Activated CD4-positive, alpha-beta memory T cell treated with anti-CD3 and anti-CD28 coated beads for 36 hours (primary cell): ENCODE measurements at regions of chr16 and their contacts with region 1.

Region 1: DNA sequence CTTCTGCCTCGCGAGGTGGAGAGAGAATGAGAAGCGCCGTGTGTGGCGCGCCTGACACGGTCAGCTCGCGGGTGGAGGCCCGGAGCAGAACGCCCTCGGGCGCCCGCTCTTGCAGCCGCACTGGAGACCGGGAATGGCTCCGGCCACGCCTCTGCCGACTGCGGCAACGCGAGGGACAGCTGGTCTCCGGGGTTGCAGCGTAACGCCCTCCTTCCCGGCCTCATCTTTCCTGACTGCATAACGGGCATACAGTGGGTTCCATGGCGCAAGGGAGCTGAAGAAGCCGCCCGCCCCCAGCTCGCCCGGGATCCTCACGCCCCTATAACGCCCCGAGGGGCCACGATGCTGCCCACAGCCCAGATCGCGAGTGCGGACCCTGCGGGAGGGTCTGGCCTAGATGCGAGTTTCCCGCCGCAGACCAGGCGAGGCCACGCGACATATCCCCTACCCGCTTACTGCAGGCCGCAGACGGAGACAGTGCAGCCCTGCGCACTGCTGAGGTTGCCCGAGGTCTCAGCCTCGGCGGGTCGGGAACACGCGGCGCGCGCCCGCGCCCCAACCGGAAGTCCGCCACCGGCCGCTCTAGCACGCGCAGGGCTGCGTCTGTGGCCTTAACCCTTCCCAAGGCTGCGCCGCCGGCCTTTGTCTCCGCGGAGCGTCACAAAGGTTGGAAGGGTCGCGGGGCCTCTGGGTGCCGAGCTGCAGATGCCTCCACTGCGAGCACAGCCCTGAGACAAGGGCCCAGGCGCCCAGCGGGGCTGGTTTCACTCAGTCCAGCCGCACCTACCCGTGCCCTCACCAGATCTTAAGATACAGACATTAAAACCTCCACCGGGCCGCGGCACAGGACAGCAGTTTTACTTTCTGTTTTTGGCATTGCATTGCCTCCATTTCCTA is 18.8 kb downstream of the BCL7C start:
- DNase-seq: peak; percentile 93
- H3K4me3 Mint-ChIP-seq: peak overlapping the region; percentile 96
- H3K27ac Mint-ChIP-seq: peak overlapping the region; percentile 90
- H3K4me1 Mint-ChIP-seq: peaks cover 34% of the 10 kb centered on the region
- H3K27me3 Mint-ChIP-seq: no peaks in the 10 kb centered on the region

Region 2: DNA sequence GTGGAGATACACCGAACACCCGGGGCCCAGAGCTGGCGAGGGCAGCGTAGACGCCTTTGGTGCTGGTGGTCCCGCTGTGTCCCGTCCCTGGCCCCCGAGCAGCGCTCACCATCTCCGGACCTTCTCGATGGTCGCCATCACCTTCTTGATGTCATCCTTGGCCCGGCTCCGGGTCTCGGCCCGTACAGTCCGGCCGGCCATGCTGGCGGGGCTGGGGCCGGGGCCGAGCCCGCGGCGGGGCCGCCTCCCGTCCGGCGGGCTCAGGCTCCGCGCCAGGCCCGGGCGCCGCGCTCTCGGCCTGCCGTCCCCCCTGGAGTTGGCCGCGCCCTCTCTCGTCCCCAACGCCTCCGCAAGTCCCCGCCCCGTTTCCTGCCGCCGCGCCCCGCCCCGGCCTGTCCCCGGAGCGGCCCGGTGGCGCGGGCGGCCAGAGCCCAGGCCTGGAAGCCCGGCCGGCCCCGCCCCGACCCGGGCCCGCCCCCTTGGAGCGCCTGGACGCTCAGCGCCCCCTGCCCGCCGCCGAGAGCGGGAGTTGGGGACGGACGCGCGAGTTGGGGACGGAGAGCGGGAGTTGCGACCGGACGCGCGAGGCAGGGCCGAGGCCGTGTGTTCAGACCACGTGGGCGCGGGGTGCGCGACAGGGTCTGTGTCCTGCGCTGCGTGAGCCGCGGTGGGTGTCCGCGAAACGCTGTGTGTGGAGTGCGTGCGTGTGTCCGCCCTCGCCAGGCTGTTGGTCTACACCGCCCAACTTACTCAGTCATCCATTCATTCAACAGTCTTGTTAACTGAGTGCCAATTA is 18.9 kb after region 1 on chr16 and contains the start of gene BCL7C:
- CTCF ChIA-PET with region 1: interaction called, 3 read pairs
- POLR2A ChIA-PET with region 1: interaction called, 5 read pairs
- intact Hi-C with region 1: loop called (anchors 2 kb)
- DNase-seq: peak; percentile 92
- H3K4me3 Mint-ChIP-seq: peak within 1 kb of the TSS; percentile 85
- H3K27ac Mint-ChIP-seq: peak within 1 kb of the TSS; percentile 74
- H3K4me1 Mint-ChIP-seq: peaks cover 38% of the 10 kb centered on the region
- H3K27me3 Mint-ChIP-seq: no peaks in the 10 kb centered on the region
- total RNA-seq, gene BCL7C: 25.6 to 25.7 TPM

Region 3: DNA sequence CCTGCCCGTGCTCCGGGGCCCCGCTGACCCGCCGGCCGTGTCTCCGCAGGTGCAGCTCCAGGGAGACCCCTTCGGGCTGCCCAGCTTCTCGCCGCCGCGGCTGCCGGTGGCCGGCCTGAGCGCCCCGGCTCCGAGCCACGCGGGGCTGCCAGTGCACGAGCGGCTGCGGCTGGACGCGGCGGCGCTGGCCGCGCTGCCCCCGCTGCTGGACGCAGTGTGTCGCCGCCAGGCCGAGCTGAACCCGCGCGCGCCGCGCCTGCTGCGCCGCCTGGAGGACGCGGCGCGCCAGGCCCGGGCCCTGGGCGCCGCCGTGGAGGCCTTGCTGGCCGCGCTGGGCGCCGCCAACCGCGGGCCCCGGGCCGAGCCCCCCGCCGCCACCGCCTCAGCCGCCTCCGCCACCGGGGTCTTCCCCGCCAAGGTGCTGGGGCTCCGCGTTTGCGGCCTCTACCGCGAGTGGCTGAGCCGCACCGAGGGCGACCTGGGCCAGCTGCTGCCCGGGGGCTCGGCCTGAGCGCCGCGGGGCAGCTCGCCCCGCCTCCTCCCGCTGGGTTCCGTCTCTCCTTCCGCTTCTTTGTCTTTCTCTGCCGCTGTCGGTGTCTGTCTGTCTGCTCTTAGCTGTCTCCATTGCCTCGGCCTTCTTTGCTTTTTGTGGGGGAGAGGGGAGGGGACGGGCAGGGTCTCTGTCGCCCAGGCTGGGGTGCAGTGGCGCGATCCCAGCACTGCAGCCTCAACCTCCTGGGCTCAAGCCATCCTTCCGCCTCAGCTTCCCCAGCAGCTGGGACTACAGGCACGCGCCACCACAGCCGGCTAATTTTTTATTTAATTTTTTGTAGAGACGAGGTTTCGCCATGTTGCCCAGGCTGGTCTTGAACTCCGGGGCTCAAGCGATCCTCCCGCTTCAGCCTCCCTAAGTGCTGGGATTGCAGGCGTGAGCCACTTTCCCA is 27.2 kb after region 1 on chr16:
- CTCF ChIA-PET with region 1: interaction called, 33 read pairs
- POLR2A ChIA-PET with region 1: interaction called, 14 read pairs
- intact Hi-C with region 1: loop called (anchors 2 kb)
- DNase-seq: peak; percentile 69
- H3K4me3 Mint-ChIP-seq: peak overlapping the region; percentile 93
- H3K27ac Mint-ChIP-seq: peak overlapping the region; percentile 95
- H3K4me1 Mint-ChIP-seq: peaks cover 27% of the 10 kb centered on the region
- H3K27me3 Mint-ChIP-seq: no peaks in the 10 kb centered on the region